AG04450 (cell line): ENCODE measurements at regions of chr5 and their contacts with region 1.

Region 1: DNA sequence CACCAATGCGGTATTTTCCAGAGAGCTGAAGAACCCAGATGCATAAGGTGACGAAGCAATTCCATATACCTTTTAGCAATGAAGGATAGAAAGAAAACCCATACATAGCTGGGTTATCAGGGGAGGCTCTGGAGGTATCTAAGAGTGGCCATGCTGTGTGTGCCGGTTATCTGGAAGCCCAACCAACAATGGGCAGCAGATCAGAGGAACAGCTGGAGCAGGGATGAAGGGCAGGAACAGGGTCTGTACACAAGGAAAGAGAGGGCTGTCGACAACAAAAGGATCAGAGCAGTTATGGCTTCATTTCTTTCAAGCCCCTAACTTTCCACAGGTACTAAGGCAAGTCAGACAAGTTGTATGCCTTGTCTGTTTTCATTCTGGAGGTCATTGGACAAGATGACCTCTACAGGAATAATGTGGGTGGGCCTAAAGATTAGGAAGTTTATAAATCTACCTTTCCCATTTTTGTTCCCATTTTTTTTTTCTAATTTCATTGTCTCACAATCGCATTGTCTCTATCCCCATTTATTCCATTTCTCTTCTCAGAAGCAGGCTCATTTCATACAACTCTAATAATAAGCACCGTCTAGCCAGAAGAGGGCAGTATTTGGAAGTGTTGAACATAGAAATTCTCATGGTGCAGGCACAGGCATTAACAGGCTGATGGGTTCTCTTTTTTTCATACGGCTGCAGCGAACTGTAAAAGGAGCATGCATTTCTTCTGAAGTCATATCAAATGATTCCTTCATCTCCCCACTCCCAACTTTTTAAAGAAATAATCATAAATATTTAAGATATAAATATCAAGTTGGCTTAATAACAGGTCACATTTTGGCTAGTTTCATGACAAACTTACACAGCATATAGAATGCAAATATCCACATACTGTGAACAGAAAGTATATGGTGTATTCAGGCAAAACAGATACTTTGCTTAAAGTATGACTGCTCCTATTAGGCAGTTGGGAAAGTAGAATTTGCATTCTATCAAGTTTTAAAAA is 63.5 kb downstream of the ZNF474 start:
- DNase-seq: peak; percentile 41
- H3K4me3 ChIP-seq: no peak overlapping the region
- H3K27ac ChIP-seq: no peak overlapping the region
- H3K27me3 ChIP-seq: no peaks in the 10 kb centered on the region
- CTCF ChIP-seq: peak; percentile 58

Region 2: DNA sequence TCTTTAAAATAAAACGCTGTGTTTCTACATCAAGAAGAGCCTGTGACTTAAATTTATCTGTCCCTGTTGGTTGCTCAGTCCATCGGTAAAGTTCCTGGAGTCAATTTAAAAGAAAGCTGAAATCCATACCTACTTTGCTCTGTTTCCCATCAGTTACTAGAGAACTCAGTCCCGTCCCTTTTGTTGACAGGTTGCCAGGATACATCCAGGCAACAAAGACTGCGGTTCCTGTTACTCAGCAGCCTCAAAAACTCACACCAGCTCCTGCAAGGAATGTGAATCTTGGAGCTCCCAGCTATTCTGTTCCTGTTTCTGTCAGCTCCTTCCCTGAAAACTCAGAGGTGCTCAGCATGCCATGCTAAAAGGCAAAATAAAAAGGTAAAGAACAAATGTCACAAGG is 63.5 kb before region 1 on chr5 and contains the start of gene ZNF474:
- CTCF ChIA-PET with region 1: no interaction called
- POLR2A ChIA-PET with region 1: no interaction called
- DNase-seq: peak; percentile 89
- H3K4me3 ChIP-seq: no peak within 1 kb of the TSS; the same call in 1 of the 2 replicates
- H3K27ac ChIP-seq: no peak within 1 kb of the TSS
- H3K27me3 ChIP-seq: no peaks in the 10 kb centered on the region
- CTCF ChIP-seq: no peak
- polyA plus RNA-seq, gene ZNF474: 0.37 TPM in 2 replicates

Region 3: DNA sequence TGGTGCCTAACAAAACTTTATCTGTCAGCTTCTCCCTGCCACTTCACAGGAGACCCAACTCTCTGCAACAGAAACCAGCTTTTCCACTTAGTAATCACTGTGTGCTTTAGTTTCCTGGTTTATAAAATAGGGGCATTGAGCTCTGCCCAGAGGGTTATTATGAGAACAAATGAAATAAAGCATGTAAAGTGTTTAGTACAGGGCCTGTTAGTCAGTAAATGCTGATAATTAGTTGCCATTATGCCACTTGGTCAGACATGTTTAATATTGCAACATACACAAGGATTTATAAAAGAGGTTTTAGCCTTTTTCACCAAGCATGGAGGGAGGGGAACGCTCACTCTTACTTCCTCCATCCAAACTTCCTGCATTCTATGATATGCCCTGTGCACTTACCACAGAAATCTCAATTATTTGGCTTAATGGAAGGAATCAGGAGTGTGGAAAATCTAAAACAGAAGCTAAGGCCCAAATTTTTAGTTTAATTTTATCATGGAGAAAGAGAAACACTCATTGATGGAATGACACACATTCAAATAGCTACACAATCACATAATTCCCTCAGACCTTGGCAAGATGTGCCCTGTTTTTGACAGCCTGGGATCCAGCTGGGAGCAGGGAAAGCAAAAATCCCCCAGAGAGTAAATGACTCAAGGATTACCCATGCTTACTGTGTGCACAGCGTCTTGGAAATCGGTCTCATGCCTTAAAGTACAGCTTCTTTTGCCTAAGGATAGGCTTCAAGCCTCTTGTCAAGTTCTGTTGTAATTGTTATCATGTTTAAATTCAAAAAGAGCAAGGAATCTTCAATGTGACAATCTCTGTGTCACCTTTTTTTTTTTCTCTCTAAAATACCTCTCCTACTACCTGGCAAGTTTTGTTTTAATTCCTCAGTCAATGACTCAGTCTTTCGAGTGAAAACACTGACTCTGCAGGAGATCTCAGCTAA is 29.4 kb before region 1 on chr5:
- CTCF ChIA-PET with region 1: interaction called, 15 read pairs
- POLR2A ChIA-PET with region 1: no interaction called
- DNase-seq: peak; percentile 73
- H3K4me3 ChIP-seq: peak overlapping the region; percentile 8; the same call in 1 of the 2 replicates
- H3K27ac ChIP-seq: peak overlapping the region; percentile 90
- H3K27me3 ChIP-seq: no peaks in the 10 kb centered on the region
- CTCF ChIP-seq: no peak

Region 4: DNA sequence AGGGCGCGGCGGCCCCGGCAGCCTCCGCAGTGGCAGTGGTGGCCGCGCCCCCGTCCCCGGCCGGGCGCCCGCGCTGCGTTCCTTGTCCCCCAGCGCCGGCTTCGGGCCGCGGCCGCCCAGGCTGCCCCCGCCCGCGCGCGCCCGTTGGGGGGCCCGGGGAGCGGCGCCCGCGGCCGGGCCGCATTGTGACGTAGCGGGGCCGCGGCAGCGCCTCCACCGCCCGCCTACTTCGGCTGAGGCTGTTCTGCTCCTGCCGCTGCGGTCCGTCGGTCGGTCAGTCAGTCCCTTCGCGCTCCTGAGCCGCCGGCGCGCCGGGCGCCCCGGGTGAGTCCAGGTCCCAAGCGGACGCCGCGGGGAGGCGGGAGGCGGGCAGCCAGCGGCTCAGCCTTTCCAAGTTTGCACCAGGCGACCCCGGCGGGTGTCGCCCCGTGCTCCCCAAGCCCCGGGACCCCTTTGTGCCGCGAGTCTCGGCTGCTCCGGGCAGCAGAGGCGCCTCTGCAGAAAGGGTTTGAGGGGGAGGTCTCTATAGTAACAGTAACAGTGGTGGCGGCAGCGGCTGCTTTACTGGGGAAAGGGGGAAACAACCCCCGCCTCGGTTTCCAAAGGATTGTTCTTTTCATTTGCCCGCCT is 119.3 kb after region 1 on chr5 and contains the start of gene SNCAIP:
- CTCF ChIA-PET with region 1: interaction called, 14 read pairs
- POLR2A ChIA-PET with region 1: no interaction called
- DNase-seq: no peak
- H3K4me3 ChIP-seq: peak within 1 kb of the TSS; percentile 75
- H3K27ac ChIP-seq: peak within 1 kb of the TSS; percentile 25
- H3K27me3 ChIP-seq: no peaks in the 10 kb centered on the region
- CTCF ChIP-seq: no peak
- polyA plus RNA-seq, gene SNCAIP: 10.7 and 12.3 TPM in 2 replicates

Region 5: GRCh38 chr5:122400938-122401337 is 208.1 kb after region 1 on chr5:
- CTCF ChIA-PET with region 1: interaction called, 21 read pairs
- POLR2A ChIA-PET with region 1: no interaction called
- DNase-seq: no peak
- H3K4me3 ChIP-seq: no peak overlapping the region
- H3K27ac ChIP-seq: no peak overlapping the region
- H3K27me3 ChIP-seq: no peaks in the 10 kb centered on the region
- CTCF ChIP-seq: no peak

Region 6: GRCh38 chr5:122463221-122463620 is 270.4 kb after region 1 on chr5:
- CTCF ChIA-PET with region 1: interaction called, 22 read pairs
- POLR2A ChIA-PET with region 1: no interaction called
- DNase-seq: peak; percentile 23
- H3K4me3 ChIP-seq: no peak overlapping the region
- H3K27ac ChIP-seq: no peak overlapping the region
- H3K27me3 ChIP-seq: no peaks in the 10 kb centered on the region
- CTCF ChIP-seq: no peak

Region 7: DNA sequence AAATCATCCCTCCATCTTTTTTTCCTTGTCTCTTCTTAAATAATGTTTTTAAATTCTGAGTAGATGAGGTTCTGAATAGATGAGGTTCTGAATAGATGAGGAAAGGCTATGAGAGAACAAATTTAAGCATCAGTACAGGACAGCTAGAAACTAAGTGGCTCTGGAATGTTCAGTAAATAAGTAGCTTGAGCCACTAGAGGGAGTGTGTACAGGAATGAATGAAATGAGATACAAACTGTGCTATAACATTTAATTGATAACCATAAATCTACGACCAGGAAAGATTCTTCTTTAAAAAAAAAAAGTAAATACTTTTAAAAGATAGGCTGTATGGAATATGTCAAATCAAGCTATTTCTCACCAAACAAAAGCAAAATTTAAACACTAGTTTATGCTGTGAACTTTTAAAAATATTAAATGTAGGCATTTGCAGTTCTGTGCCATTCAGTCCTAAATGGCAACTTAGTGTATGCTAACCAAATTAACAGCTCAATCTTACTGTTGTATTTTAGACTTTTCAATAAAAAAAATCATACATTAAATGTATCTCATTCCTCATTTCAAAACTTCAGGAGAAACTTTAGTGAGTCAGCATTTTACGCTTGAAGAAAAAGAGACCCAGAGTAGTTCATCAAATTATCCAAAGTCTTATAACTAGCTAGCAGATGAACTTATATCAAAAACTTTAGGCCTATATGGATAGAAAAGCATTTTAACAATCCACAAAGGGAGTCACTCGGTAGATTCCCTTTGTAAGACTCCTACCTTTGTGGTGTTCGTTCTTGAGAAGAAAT is 511.6 kb after region 1 on chr5:
- CTCF ChIA-PET with region 1: interaction called, 19 read pairs
- POLR2A ChIA-PET with region 1: no interaction called
- DNase-seq: peak; percentile 18
- H3K4me3 ChIP-seq: no peak overlapping the region
- H3K27ac ChIP-seq: no peak overlapping the region
- H3K27me3 ChIP-seq: no peaks in the 10 kb centered on the region
- CTCF ChIP-seq: peak; percentile 74